ENCODE measurements at regions of chr6 and their contacts with region 1.

Region 1: GRCh38 chr6:90062667-90063066 is 168.4 kb downstream of the GJA10 start:
- DNase-seq: no peak
- ATAC-seq: no peak
- H3K4me3 Mint-ChIP-seq: no peak overlapping the region
- H3K27ac Mint-ChIP-seq: no peak overlapping the region
- H3K4me1 Mint-ChIP-seq: peaks cover 38% of the 10 kb centered on the region
- H3K27me3 Mint-ChIP-seq: no peaks in the 10 kb centered on the region
- CTCF ChIP-seq: no peak

Region 2: GRCh38 chr6:90049295-90049694 is 13.4 kb before region 1 on chr6:
- CTCF ChIA-PET with region 1: no interaction called
- POLR2A ChIA-PET with region 1: no interaction called
- intact Hi-C with region 1: loop called (anchors 2 kb)
- DNase-seq: no peak
- ATAC-seq: peak; percentile 50
- H3K4me3 Mint-ChIP-seq: peak overlapping the region; percentile 28
- H3K27ac Mint-ChIP-seq: peak overlapping the region; percentile 81
- H3K4me1 Mint-ChIP-seq: peaks cover 30% of the 10 kb centered on the region
- H3K27me3 Mint-ChIP-seq: no peaks in the 10 kb centered on the region
- CTCF ChIP-seq: no peak